Activated CD4-positive, alpha-beta memory T cell treated with anti-CD3 and anti-CD28 coated beads for 36 hours (primary cell): ENCODE measurements at regions of chr9 and their contacts with region 1.

Region 1: GRCh38 chr9:79623799-79624721 is 52.3 kb downstream of the TLE4 start:
- DNase-seq: peak; percentile 47
- H3K4me3 Mint-ChIP-seq: peak overlapping the region; percentile 22
- H3K27ac Mint-ChIP-seq: peak overlapping the region; percentile 81
- H3K4me1 Mint-ChIP-seq: peaks cover 44% of the 10 kb centered on the region
- H3K27me3 Mint-ChIP-seq: no peaks in the 10 kb centered on the region

Region 2: DNA sequence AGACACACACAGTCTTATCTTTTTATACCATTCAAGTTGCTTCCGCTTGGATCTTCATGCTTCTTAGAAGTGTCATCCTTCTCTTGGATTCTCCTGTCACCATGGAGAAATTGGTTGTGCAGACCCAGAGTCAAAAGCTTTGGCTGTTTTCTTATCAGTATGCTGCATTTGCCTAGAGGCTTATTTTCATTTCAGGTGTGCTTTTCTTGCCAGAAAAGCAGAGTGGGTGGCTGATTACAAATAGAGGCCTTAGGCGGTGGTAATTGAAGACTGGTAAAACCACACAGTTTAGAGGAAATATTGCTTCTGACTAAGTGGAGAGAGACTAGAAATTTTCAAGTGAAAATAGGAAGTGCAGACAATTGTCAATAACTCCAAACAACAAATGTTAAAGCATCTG is 122.5 kb before region 1 on chr9:
- CTCF ChIA-PET with region 1: no interaction called
- POLR2A ChIA-PET with region 1: no interaction called
- intact Hi-C with region 1: no loop called
- DNase-seq: no peak
- H3K4me3 Mint-ChIP-seq: no peak overlapping the region
- H3K27ac Mint-ChIP-seq: no peak overlapping the region
- H3K4me1 Mint-ChIP-seq: no peaks in the 10 kb centered on the region
- H3K27me3 Mint-ChIP-seq: peaks cover 1% of the 10 kb centered on the region

Region 3: DNA sequence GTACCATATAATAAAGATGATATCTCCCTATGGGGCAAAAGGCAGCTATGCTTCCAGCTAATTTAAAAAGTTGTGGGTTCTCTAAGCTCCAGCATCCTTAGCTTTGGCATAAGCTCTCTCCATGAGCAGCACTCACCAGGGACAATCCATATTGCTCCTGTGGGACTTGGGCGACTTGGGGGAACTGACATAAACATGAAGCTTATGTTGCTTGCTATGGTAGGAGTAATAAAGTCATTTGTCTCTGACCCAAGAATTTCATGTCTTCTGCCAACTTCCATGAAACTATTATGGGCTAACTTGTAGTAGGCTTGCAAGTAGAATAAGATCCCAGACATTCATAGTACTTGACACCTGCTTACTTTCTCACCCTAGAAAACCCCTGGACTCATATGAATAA is 88.5 kb before region 1 on chr9:
- CTCF ChIA-PET with region 1: no interaction called
- POLR2A ChIA-PET with region 1: no interaction called
- intact Hi-C with region 1: no loop called
- DNase-seq: no peak
- H3K4me3 Mint-ChIP-seq: no peak overlapping the region
- H3K27ac Mint-ChIP-seq: no peak overlapping the region
- H3K4me1 Mint-ChIP-seq: no peaks in the 10 kb centered on the region
- H3K27me3 Mint-ChIP-seq: peaks cover 1% of the 10 kb centered on the region

Region 4: DNA sequence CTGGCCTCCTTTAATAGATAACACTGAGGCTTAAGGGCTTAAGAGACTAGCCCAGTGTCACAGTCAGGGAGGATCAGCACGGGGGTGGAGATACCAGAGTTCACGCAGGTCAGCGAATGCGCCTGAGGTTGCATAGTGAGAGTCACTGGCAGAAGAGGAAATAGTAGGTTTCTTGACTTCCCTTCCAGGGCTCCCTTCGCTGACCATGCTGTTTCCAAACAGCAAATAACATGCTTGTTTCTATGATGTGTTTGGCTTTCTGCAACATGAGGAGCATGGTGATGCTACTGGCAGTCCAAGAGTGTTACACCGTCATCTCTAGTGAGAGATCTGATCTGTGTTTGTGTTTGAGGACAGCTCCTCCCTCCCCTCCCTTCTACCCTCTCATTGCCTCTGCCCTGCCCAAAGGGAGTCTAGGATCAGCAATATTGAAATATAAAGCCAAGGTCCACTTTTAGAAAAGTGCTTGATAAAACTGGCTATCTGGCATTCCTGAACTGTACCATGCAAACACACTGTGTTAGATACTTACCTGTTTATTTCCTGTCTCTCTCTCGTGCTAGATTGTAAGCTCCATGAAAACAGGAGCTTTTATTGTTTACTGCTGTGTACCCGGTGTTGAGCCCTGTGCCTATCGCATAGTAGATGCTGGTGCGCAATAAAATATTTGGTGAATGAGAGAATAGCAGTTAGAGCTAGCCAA is 40.0 kb before region 1 on chr9:
- CTCF ChIA-PET with region 1: no interaction called
- POLR2A ChIA-PET with region 1: no interaction called
- intact Hi-C with region 1: loop called (anchors 2 kb)
- DNase-seq: peak; percentile 73
- H3K4me3 Mint-ChIP-seq: peak overlapping the region; percentile 27
- H3K27ac Mint-ChIP-seq: peak overlapping the region; percentile 39
- H3K4me1 Mint-ChIP-seq: peaks cover 61% of the 10 kb centered on the region
- H3K27me3 Mint-ChIP-seq: no peaks in the 10 kb centered on the region

Region 5: DNA sequence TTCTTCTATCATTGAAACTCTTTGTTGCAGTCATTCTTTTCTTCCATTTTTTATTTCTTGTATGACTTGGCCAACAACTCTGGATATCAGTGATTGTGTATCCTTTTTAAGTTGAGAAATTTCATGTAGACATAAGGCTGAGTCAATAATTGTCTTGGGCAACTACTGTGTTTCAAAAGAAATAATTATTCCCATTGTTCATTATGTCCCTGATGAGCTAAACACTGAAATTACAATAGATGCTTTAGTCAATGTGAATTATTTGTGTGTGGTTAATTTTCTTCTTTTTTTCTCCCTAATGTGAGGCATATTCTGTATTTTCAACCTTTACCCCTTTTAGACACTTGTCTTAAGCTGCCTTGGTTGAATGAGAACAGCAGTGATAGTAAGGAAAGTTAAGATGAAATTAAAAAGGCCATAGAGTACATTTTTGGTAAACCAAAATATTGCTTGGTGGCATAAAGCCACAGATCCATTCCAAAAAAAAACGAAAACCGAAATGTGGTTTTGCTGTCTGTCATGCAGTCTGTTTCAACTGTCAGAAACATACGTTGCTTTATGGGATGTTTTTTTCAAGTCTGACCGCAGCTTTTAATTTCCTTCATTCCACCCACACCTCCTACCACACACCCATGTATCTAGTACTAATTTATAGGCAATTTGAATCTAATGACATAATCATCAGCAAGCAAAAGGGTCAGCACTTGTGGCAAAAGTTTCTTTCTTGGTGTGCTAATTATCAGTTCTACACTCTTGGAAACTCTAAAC is 31.1 kb before region 1 on chr9:
- CTCF ChIA-PET with region 1: interaction called, 3 read pairs
- POLR2A ChIA-PET with region 1: no interaction called
- intact Hi-C with region 1: loop called (anchors 2 kb)
- DNase-seq: peak; percentile 15
- H3K4me3 Mint-ChIP-seq: peak overlapping the region; percentile 1
- H3K27ac Mint-ChIP-seq: peak overlapping the region; percentile 36
- H3K4me1 Mint-ChIP-seq: peaks cover 59% of the 10 kb centered on the region
- H3K27me3 Mint-ChIP-seq: no peaks in the 10 kb centered on the region

Region 6: GRCh38 chr9:79694676-79695400 is 70.8 kb after region 1 on chr9:
- CTCF ChIA-PET with region 1: no interaction called
- POLR2A ChIA-PET with region 1: no interaction called
- intact Hi-C with region 1: no loop called
- DNase-seq: no peak
- H3K4me3 Mint-ChIP-seq: no peak overlapping the region
- H3K27ac Mint-ChIP-seq: no peak overlapping the region
- H3K4me1 Mint-ChIP-seq: peaks cover 51% of the 10 kb centered on the region
- H3K27me3 Mint-ChIP-seq: no peaks in the 10 kb centered on the region